Psoas muscle (tissue), 8 donors: ENCODE measurements at regions of chr5 and their contacts with region 1.

Region 1: GRCh38 chr5:138464008-138464387 is 1.3 kb upstream of the EGR1 start:
- DNase-seq: peak; percentile 97 to 99
- ATAC-seq: peak; percentile 69 to 82 (median 74)
- H3K4me3 ChIP-seq: peak overlapping the region; percentile 93
- H3K27ac ChIP-seq: peak overlapping the region; percentile 99
- H3K4me1 ChIP-seq: peaks cover 5% of the 10 kb centered on the region
- H3K27me3 ChIP-seq: no peaks in the 10 kb centered on the region
- CTCF ChIP-seq: peak; percentile 90

Region 2: GRCh38 chr5:138274189-138274853 is 189.7 kb before region 1 on chr5 and contains the start of gene GFRA3:
- intact Hi-C with region 1: no loop called
- DNase-seq: no peak
- ATAC-seq: peak in 1 of 4 donors; percentile 30
- H3K4me3 ChIP-seq: peak within 1 kb of the TSS; percentile 64
- H3K27ac ChIP-seq: no peak within 1 kb of the TSS
- H3K4me1 ChIP-seq: no peaks in the 10 kb centered on the region
- H3K27me3 ChIP-seq: peaks cover 0 to 19% (median 0%) of the 10 kb centered on the region in 3 donors
- CTCF ChIP-seq: no peak
- total RNA-seq, gene GFRA3: 0.15 to 0.17 TPM in 2 of 4 donors, not detected in the others

Region 3: DNA sequence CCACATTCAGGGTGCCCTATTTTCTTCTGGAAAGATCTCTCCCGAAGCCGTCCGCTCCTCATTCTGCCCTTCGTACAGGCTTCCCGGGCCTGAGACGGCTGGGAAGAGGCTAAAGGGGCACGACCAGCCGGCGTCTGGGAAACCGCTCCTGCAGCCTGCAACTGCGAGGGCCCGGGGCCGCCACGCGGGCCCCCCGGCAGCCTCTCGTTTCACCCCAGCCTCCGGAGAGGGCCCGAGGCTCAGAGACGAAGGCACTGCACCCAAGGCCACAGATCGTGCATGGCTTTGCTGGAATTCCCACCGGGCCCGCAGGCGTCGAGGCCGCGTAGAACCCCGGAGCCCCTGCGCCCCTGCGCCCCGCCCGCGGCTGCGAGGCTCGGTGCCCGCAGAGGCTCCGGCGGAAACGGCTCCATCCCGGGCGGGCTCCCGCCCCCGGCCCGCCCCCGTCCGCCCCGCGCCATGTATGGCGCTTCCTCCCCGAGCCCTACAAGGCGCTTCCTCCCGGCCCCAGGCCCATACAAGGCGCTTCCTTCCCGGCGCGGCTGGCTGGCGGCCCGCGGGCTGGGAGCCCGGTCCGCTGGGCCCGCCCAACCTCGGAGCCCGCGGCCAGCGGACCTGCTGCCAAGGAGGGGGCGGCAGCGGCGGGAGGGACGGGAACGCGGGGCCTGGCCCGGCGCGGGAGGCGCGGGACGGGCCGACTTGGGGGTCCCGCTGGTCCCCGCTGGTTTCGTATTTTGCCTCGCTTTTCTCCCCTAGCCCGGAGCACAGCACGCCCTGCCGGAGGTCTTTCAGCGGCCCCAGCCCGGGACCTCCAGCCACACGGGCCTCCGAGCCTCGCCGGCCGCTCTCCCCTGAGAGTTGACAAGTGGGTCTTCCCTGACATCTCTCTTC is 27.9 kb after region 1 on chr5:
- intact Hi-C with region 1: loop called in 1 of 2 experiments (anchors 2 kb)
- DNase-seq: peak; percentile 94 to 96
- ATAC-seq: peak; percentile 96 to 98 (median 98)
- H3K4me3 ChIP-seq: peak overlapping the region; percentile 78
- H3K27ac ChIP-seq: peak overlapping the region; percentile 61
- H3K4me1 ChIP-seq: peaks cover 10% of the 10 kb centered on the region
- H3K27me3 ChIP-seq: peaks cover 0 to 15% (median 2%) of the 10 kb centered on the region in 3 donors
- CTCF ChIP-seq: no peak

Region 4: DNA sequence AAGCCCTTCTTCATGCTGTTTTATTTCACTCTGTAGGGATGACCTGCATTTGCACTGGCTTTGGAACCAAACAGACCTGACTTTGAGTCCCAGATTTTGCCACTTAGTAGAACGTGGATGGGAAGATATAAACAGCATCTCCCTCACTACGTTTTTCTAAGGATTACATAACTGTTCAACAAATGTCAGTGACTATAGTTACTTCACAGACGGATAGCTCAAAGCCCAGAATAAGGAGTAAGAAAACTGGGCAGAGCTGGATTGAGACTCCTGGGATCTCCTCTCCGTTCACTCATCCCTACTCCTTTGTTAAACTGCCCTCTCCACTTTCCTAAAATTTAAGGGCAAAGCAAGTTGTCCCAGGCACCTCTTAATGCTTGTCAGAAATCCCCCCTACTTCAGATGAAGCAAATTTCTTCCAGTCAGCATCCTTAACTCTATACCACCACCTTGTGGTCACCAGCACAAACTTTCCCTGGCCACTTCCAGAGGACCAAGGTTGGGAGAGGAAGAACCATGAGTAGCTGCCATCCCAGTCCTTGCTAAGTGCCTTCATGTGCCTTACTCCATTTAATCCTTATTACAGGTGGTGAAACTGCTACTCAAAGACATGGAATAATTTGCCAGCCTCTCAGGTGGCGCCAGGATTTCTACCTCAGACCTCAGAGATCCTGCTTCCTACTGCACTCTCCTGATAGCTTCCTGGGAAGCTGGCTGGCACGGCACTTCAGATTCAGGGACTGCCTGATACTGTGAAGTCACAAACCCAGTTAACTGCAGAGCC is 39.7 kb after region 1 on chr5:
- intact Hi-C with region 1: loop called (anchors 1 to 5 kb)
- DNase-seq: no peak
- ATAC-seq: peak; percentile 76 to 88 (median 82)
- H3K4me3 ChIP-seq: no peak overlapping the region
- H3K27ac ChIP-seq: peak overlapping the region; percentile 27
- H3K4me1 ChIP-seq: peaks cover 8% of the 10 kb centered on the region
- H3K27me3 ChIP-seq: no peaks in the 10 kb centered on the region
- CTCF ChIP-seq: peak; percentile 73

Region 5: DNA sequence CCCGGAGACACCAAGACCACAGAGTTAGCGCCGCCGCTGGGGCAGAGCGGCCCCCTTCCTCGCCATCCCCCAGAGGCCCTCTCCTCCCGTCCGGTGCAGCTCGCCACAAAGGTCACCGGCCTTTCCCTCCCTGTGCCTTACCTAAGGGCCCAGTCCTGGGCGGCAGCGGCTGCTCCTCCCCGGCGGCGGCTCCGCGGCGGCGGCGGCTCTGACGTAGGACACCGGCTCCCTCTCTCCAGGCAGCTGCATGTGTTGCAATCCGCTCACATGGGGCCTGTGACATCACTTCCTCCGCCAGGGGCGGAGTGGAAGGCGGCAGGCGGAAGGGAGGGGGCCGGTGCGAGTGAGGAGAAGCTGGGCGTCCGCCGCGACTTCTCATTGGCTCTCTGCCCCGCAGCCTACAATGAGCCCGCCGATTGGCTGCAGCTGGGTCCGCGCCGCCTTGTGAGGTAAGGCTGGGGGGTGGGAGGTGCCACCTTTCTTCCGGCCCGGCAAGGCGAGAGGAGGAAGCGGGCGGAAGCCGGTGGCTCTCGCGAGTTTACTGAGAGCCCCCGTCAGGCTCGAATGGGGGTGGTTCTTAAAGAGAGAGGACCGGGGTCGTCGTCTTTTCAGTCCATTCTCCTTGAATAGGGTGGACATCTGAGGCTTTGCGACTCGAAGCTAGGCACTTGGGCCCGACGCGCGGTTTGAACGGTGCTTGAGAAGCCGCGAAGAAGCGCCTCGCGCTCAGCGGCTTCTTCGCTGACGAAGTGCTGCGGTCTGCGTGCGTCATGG is 79.1 kb after region 1 on chr5 and contains the start of gene ETF1:
- intact Hi-C with region 1: loop called in 1 of 2 experiments (anchors 1 kb)
- DNase-seq: peak; percentile 100
- ATAC-seq: peak; percentile 88 to 93 (median 90)
- H3K4me3 ChIP-seq: peak within 1 kb of the TSS; percentile 96
- H3K27ac ChIP-seq: peak within 1 kb of the TSS; percentile 99
- H3K4me1 ChIP-seq: peaks cover 61% of the 10 kb centered on the region
- H3K27me3 ChIP-seq: no peaks in the 10 kb centered on the region
- CTCF ChIP-seq: no peak
- total RNA-seq, gene ETF1: 84.2 to 174 (median 150) TPM